RWPE1 (cell line): ENCODE measurements at regions of chr4 and their contacts with region 1.

Region 1: DNA sequence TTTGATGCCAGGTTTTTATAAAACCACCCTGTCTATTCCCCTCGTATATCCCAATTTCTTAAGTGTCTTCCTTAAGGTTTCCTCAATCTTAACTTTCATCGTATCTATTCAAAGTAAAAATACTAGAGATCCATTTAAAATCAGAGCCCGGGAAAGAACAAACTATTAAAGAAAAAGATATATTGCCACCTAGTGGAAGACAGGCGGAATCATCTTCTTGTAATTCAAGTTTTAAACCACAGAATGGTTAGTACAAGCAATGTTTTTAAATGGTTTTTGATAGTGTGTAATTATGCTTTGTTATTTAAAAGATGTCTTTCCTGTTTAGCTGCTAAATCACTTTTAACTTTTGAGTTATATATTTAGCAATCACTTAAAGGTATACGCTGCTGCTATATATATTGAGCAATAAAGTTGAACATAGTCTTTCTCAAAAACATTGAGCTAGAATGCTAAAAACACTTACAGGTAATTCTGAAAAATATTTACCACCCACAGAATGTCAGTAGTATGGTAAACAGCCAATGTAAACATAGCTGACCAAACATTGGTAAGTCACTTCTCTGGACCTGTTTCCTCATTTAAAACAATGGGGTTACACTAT is 18.2 kb downstream of the PRDM8 start:
- DNase-seq: no peak
- H3K27ac ChIP-seq: no peak overlapping the region
- CTCF ChIP-seq: peak; percentile 75

Region 2: DNA sequence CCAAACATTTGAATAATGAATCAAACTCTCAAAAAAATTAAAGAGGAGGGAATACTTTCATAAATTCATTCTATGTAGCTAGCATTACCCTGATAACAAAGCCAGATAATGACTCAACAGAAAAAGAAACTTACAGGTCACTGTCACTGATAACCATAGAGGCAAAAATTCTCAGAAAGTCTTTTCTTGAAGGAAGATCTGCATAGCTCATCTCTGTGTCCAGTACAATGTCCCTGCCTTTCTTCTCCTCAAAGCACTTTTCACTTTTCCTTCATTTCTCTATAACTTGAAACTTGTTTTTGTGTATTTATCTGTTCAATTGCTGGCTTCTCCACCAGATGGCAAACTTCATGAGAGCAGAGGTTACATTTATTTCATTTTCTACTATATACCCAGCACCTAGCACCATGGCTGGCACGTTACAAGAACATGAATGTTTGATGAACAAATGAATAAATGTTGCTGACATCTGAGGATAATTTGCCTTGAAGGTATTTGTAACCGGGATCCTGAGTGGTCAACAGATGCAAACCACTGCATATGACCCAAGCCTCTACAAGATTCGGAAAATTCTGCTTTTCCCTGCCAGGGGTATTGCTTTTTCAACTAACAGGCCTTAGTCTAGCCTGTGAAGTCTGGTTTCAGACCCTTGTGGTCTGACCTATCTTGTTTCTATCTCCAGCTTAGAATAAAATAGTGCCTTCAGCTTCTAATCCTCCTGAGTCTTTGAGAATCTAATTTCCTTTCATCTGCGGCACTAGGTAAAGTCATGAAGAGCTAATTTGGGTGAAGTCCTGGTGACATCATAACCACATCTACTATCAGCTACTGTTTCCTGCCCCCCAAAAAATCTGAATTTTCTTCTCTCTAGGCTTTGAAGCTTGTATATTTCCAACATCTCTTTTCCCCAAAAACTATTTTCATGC is 90.0 kb before region 1 on chr4:
- CTCF ChIA-PET with region 1: no interaction called
- POLR2A ChIA-PET with region 1: no interaction called
- DNase-seq: peak; percentile 15
- H3K27ac ChIP-seq: no peak overlapping the region
- CTCF ChIP-seq: peak; percentile 36

Region 3: GRCh38 chr4:80173401-80173800 is 42.1 kb before region 1 on chr4:
- CTCF ChIA-PET with region 1: no interaction called
- POLR2A ChIA-PET with region 1: no interaction called
- DNase-seq: peak; percentile 40
- H3K27ac ChIP-seq: no peak overlapping the region
- CTCF ChIP-seq: no peak

Region 4: DNA sequence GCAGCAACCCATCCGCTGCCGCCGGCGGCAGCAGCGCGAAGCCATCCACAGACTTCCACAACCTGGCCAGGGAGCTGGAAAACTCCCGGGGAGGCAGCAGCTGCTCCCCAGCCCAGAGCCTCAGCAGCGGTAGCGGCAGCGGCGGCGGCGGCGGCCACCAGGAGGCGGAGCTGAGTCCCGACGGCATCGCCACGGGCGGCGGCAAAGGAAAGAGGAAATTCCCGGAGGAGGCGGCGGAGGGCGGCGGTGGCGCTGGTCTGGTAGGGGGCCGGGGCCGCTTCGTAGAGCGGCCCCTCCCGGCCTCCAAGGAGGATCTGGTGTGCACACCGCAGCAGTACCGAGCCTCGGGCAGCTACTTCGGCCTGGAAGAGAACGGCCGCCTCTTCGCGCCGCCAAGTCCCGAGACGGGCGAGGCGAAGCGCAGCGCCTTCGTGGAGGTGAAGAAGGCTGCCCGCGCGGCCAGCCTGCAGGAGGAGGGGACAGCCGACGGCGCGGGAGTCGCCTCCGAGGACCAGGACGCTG is 13.3 kb before region 1 on chr4:
- CTCF ChIA-PET with region 1: interaction called, 11 read pairs
- POLR2A ChIA-PET with region 1: no interaction called
- DNase-seq: peak; percentile 71
- H3K27ac ChIP-seq: peak overlapping the region; percentile 60
- CTCF ChIP-seq: peak; percentile 89